PC-3 (cell line): ENCODE measurements at regions of chr2 and their contacts with region 1.

Region 1: DNA sequence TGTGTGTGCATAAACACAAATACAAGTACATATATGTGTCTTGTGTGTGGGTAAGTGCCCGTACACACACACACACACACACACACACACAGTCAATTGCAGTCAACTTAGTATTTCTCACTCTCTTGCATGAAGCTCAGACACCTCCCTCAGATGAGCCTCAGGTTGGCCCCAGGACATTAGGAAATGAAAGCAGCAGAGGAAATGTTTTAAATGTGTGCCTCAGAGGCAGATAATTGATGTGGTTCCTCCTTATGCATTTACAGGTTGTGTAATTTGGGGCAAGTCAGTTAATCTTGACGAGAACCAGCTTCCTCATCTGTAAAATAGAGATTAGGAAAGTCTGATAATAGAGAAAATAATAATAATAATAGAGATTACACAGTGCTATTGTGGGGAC is 814.0 kb upstream of the ID2 start:
- DNase-seq: no peak
- ATAC-seq: no peak
- H3K4me3 ChIP-seq: no peak overlapping the region
- H3K27ac ChIP-seq: no peak overlapping the region
- H3K4me1 ChIP-seq: no peaks in the 10 kb centered on the region
- H3K27me3 ChIP-seq: no peaks in the 10 kb centered on the region
- CTCF ChIP-seq: no peak

Region 2: GRCh38 chr2:7984693-7985353 is 117.0 kb after region 1 on chr2:
- CTCF ChIA-PET with region 1: no interaction called
- POLR2A ChIA-PET with region 1: no interaction called
- intact Hi-C with region 1: loop called (anchors 10 kb)
- DNase-seq: no peak
- ATAC-seq: no peak
- H3K4me3 ChIP-seq: no peak overlapping the region
- H3K27ac ChIP-seq: no peak overlapping the region
- H3K4me1 ChIP-seq: 0 out of 2 replicates have a peak, but pooled peaks cover 3% of the 10 kb centered on the region
- H3K27me3 ChIP-seq: no peaks in the 10 kb centered on the region
- CTCF ChIP-seq: no peak